Calu3 (cell line): ENCODE measurements at regions of chr12 and their contacts with region 1.

Region 1: DNA sequence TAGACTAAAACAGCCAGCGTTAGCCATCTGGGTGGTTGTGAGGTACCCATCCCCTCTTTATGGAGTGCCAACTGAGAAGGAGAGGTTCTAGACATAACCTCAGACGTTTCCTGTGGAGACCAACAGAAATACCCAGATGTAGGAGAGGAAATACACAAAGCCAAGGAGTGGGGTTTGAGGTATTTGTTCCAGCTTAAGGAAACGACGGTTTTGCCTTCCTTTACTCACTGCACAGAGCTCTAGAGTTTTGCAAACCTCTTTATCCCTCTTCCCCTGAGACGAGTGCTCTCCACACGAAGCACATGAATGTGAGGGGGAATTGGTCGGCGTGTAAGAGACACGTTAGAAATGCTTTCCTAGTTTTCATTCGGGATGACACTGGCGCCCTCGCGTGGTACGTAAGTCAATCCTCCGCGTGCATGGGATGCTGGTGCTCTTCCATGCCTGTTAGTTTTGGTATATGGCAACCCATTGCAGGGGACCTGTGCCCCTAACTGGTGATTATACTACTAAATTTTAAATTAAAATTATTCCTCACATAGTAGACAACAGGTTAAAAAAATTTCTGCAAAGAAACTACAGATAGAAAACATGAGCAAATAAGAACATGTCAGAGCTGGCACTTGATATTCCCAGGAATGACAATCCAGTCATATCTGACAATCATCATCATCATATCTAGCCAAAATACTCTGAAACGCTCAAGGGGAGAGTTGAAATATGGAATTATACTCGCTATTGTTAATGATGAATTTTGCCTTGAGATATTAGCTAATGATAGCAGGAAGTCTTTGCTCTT is 121.7 kb downstream of the PPM1H start:
- DNase-seq: peak; percentile 66
- H3K4me3 Mint-ChIP-seq: no peak overlapping the region
- H3K27ac Mint-ChIP-seq: no peak overlapping the region
- H3K4me1 Mint-ChIP-seq: peaks cover 13% of the 10 kb centered on the region
- H3K27me3 Mint-ChIP-seq: no peaks in the 10 kb centered on the region
- CTCF ChIP-seq: peak; percentile 80

Region 2: GRCh38 chr12:62259993-62260732 is 553.1 kb before region 1 on chr12 and contains the start of gene USP15:
- CTCF ChIA-PET with region 1: no interaction called
- intact Hi-C with region 1: loop called (anchors 10 kb)
- DNase-seq: peak; percentile 99
- H3K4me3 Mint-ChIP-seq: peak within 1 kb of the TSS; percentile 90
- H3K27ac Mint-ChIP-seq: peak within 1 kb of the TSS; percentile 98
- H3K4me1 Mint-ChIP-seq: peaks cover 18% of the 10 kb centered on the region
- H3K27me3 Mint-ChIP-seq: no peaks in the 10 kb centered on the region
- CTCF ChIP-seq: peak; percentile 76
- total RNA-seq, gene USP15: 66.1 and 82.4 TPM in 2 replicates

Region 3: GRCh38 chr12:62435303-62436163 is 377.7 kb before region 1 on chr12:
- CTCF ChIA-PET with region 1: no interaction called
- intact Hi-C with region 1: loop called (anchors 5 kb)
- DNase-seq: peak; percentile 70
- H3K4me3 Mint-ChIP-seq: peak overlapping the region; percentile 85
- H3K27ac Mint-ChIP-seq: no peak overlapping the region
- H3K4me1 Mint-ChIP-seq: peaks cover 6% of the 10 kb centered on the region
- H3K27me3 Mint-ChIP-seq: peaks cover 26% of the 10 kb centered on the region
- CTCF ChIP-seq: no peak

Region 4: DNA sequence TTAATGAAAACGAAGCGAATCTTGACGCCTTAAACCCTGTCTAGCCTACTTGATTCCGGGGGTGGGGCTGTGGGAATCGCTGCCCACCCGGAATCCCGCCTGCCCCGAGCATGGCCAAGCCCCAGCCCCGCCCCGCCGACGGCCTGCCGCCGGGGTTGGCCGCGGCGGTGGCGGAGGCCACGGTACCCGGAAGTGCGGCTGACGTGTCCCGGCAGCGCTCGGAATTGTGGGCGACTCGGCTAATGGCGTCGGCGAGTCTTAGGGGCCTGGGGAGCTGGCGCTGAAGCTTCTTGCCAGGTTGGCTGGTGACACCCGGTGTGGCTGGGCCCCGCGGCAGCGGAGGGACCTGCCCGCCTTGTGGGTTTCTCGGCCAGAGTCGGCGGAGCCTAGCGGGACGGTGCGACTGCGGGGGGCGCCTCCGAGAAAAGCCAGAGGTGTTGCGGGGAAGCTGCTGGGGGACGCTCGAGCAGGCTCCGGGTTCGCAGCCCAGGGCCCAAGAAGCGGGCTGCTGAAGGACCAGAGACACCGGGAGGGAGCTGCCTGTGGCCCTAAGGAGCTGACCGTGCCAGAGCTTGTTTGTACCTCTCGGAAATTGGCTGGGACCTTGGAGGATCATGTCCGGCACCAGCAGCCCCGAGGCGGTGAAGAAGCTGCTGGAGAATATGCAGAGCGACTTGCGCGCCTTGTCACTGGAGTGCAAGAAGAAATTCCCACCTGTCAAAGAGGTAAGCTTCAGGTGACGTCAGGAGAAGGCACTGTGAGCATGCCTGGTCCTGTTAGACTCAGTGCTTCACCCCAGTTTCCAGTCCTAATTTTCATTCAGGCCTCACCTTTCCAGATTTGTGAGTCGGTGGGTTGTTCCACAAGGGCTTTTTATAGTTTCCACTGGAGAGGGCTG is 346.4 kb before region 1 on chr12 and contains the start of gene MON2:
- CTCF ChIA-PET with region 1: no interaction called
- intact Hi-C with region 1: no loop called
- DNase-seq: peak; percentile 95
- H3K4me3 Mint-ChIP-seq: peak within 1 kb of the TSS; percentile 93
- H3K27ac Mint-ChIP-seq: peak within 1 kb of the TSS; percentile 93
- H3K4me1 Mint-ChIP-seq: peaks cover 9% of the 10 kb centered on the region
- H3K27me3 Mint-ChIP-seq: peaks cover 22% of the 10 kb centered on the region
- CTCF ChIP-seq: no peak
- total RNA-seq, gene MON2: 46.7 and 48.6 TPM in 2 replicates

Region 5: DNA sequence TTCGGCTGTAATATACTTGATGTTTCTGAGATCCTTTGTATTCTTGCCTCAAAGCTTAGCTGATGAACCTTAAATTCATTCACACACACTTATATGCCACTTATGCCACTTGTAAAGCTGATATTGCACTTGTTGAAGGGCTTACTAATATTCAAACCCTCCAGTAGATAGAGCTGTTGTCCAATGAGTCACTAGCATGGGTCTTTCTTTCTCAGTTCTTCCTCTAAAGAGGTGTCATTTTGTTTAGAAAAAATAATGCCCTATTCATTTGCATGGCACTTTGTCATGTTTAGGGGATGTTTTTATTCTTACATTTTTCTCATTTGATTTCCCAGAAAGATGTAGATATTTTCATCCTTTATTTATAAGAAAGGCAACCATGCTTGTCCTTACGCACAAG is 290.2 kb before region 1 on chr12:
- CTCF ChIA-PET with region 1: no interaction called
- intact Hi-C with region 1: loop called (anchors 1 kb)
- DNase-seq: no peak
- H3K4me3 Mint-ChIP-seq: no peak overlapping the region
- H3K27ac Mint-ChIP-seq: no peak overlapping the region
- H3K4me1 Mint-ChIP-seq: peaks cover 17% of the 10 kb centered on the region
- H3K27me3 Mint-ChIP-seq: no peaks in the 10 kb centered on the region
- CTCF ChIP-seq: no peak

Region 6: GRCh38 chr12:62934799-62935674 is 121.8 kb after region 1 on chr12 and contains the start of gene PPM1H:
- CTCF ChIA-PET with region 1: interaction called, 19 read pairs
- intact Hi-C with region 1: loop called (anchors 2 kb)
- DNase-seq: peak; percentile 99
- H3K4me3 Mint-ChIP-seq: peak within 1 kb of the TSS; percentile 76
- H3K27ac Mint-ChIP-seq: peak within 1 kb of the TSS; percentile 90
- H3K4me1 Mint-ChIP-seq: peaks cover 34% of the 10 kb centered on the region
- H3K27me3 Mint-ChIP-seq: no peaks in the 10 kb centered on the region
- CTCF ChIP-seq: peak; percentile 93
- total RNA-seq, gene PPM1H: 36.7 and 39.1 TPM in 2 replicates

Region 7: DNA sequence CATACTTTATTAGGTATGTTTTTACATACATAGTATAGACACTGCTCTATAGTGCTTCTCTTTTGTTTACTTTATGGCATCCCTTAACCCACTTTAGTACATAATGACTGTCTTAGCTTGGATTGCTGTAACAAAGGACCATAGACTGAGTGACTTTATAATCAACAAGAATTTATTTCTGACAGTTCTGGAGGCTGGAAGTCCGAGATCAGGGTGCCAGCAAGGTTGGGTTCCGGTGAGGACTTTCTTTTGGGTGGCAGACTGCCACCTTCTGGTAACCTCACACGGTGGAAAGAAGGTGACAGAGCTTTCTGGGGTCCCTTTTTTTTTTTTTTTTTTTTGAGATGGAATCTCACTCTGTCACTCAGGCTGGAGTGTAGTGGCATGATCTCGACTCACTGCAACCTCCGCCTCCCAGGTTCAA is 170.4 kb after region 1 on chr12:
- CTCF ChIA-PET with region 1: interaction called, 8 read pairs
- intact Hi-C with region 1: loop called (anchors 5 kb)
- DNase-seq: peak; percentile 55
- H3K4me3 Mint-ChIP-seq: no peak overlapping the region
- H3K27ac Mint-ChIP-seq: no peak overlapping the region
- H3K4me1 Mint-ChIP-seq: peaks cover 9% of the 10 kb centered on the region
- H3K27me3 Mint-ChIP-seq: no peaks in the 10 kb centered on the region
- CTCF ChIP-seq: peak; percentile 58